ENCODE measurements at regions of chr18 and their contacts with region 1.

Region 1: GRCh38 chr18:21600526-21601410 is at the start of gene ESCO1:
- DNase-seq: peak; percentile 97
- ATAC-seq: peak; percentile 91
- H3K4me3 Mint-ChIP-seq: peak within 1 kb of the TSS; percentile 97
- H3K27ac Mint-ChIP-seq: peak within 1 kb of the TSS; percentile 94
- H3K4me1 Mint-ChIP-seq: peaks cover 41% of the 10 kb centered on the region
- H3K27me3 Mint-ChIP-seq: no peaks in the 10 kb centered on the region
- total RNA-seq, gene ESCO1: 21.7 to 26.5 TPM

Region 2: DNA sequence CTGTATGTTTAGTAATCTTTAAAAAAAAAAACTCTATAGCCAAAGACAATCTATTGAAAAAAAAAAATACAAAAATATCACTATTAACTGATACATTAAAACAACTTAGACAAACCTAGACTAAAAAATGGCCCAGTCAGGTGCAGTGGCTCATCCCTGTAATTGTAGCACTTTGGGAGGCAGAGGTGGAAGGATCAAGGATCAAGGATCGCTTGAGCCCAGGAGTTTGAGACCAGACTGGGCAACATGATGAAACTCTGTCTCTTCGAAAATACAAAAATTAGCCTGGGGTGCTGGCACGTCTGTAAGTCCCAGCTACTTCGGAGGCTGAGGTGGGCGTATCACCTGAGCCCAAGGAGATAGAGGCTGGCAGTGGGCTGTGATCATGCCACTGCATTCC is 16.4 kb before region 1 on chr18:
- CTCF ChIA-PET with region 1: interaction called, 6 read pairs
- POLR2A ChIA-PET with region 1: interaction called, 4 read pairs
- intact Hi-C with region 1: loop called in 1 of 2 experiments (anchors 1 kb)
- DNase-seq: no peak
- ATAC-seq: no peak
- H3K4me3 Mint-ChIP-seq: no peak overlapping the region
- H3K27ac Mint-ChIP-seq: no peak overlapping the region
- H3K4me1 Mint-ChIP-seq: peaks cover 23% of the 10 kb centered on the region
- H3K27me3 Mint-ChIP-seq: no peaks in the 10 kb centered on the region

Region 3: DNA sequence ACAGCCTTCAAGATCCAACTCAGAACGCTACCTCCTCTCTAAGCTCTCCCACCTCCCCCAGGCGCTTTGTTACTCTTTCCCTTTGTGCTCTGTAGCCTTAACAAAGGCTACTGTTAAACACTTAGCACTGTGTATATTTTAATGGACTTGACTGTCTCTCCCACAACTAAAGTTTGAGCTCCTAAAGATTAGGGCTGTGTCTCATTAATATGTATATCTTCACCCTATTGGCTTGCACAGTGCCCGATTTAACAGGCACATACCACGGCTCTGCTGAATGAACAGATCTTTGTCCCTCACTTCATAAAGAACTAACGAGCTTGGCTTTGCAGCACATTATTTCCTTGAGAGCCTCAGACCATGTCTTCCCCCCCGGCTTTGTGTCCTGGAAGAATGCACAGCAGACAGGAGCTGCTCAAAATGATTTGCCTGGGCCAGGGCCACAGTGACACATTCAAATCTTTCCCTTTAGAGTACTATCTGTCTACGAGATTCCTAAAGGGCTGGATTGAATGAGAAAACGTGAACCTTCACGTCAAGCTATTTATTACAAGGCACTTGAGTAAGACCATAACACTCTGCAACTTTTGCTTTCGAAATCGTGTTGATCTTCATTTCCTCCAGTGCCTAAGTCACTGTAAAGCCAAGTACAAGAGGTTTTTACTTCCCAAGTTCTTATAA is 81.7 kb after region 1 on chr18:
- CTCF ChIA-PET with region 1: interaction called, 4 read pairs
- POLR2A ChIA-PET with region 1: interaction called, 3 read pairs
- intact Hi-C with region 1: loop called in 1 of 2 experiments (anchors 1 kb)
- DNase-seq: peak; percentile 36
- ATAC-seq: peak; percentile 89
- H3K4me3 Mint-ChIP-seq: no peak overlapping the region
- H3K27ac Mint-ChIP-seq: no peak overlapping the region
- H3K4me1 Mint-ChIP-seq: peaks cover 11% of the 10 kb centered on the region
- H3K27me3 Mint-ChIP-seq: no peaks in the 10 kb centered on the region

Region 4: DNA sequence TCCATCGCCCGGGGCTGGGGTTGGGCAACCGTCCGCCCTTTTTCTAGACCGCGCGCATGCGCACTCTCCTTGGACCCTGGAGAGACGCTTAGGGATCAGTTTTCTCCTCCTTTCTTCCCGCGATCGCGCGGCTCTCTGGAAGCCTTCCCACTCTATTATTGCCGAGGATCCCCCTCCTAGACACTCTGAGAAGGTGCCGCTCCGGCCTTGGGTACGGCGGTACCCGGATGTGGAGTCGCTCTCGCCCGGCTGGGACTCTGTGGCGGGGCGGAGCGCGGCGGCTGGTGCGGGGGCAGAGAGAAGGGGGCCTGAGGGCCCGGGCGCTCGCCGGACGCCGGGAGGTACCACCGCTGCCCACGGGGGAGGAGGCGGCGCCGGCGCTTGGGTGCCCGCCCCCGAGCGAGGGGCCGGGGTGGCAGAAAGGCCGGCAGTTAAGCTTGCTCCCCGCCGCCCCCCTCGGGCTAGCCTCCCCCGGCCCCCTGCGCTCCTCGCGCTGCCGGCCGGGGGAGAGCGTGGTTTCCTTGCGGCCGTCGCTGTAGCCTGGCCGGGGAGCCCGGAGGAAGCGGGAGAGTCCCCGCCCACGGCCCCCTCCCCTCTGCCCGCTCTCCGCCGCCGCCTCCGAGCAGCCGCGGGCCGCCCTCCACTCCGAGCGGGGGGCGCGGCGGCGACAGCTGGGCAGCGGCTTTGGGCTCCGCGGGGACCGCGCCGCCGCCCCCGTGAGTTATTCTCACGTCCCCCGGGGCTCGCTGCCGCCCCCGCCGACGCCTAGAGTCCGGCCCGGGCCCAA is 140.1 kb after region 1 on chr18 and contains the start of gene MIB1:
- CTCF ChIA-PET with region 1: interaction called, 10 read pairs
- POLR2A ChIA-PET with region 1: interaction called, 13 read pairs
- intact Hi-C with region 1: loop called (anchors 1 to 5 kb)
- DNase-seq: peak; percentile 62
- ATAC-seq: peak; percentile 73
- H3K4me3 Mint-ChIP-seq: peak within 1 kb of the TSS; percentile 93
- H3K27ac Mint-ChIP-seq: peak within 1 kb of the TSS; percentile 96
- H3K4me1 Mint-ChIP-seq: peaks cover 40% of the 10 kb centered on the region
- H3K27me3 Mint-ChIP-seq: no peaks in the 10 kb centered on the region
- total RNA-seq, gene MIB1: 24.7 to 33.6 TPM

Measured in activated CD4-positive, alpha-beta T cell treated with anti-CD3 and anti-CD28 coated beads for 36 hours (primary cell).